AG04450 (cell line): ENCODE measurements at regions of chr13 and their contacts with region 1.

Region 1: DNA sequence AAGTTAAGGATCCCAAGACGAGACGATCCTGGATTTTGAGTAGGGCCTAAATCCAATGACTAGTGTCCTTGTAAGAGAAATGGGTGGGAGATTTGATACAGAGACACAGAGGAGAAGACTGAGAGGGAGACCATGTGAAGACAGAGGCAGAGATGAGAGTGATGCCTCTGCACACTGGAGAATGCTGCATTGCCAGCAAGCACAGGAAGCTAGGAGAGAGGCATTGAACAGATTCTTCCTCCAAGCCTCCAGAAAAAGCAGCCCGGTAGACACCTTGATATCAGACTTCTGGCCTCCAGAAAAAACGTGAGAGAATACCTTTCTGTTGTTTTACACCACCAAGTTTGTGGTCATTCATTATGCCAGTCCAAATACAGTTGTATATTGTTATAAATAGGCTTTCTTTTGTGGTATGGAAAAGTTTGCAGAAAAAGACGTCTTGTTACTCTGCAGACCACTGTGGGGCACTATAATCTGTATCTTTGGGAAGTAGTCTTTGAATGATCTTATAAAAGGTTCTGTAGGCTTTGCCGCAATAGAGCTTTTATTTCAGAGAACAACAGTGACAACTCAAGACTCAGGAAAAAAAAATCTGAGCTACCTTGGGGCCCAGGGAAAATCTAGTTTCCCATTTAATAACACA is 17.9 kb upstream of the RFC3 start:
- DNase-seq: no peak
- H3K4me3 ChIP-seq: no peak overlapping the region
- H3K27ac ChIP-seq: no peak overlapping the region
- H3K27me3 ChIP-seq: no peaks in the 10 kb centered on the region
- CTCF ChIP-seq: peak; percentile 53

Region 2: DNA sequence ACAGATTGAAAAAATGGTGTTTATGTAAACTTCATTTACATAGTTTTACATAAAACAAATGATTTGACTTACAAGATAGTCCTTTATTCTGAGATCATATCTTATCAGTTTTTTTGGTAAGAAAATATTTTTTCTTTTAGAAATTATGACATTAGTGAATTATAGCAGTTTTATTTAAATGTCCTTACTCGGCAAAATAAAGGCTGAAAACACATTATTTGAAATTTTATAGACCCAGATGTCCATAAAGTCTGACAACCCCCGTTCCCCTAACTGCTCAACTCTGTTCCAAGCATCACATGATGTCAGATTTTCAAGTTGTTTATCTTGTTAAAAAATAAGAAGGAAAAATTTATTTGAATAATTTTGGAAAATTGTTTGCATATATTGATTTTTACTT is 28.8 kb before region 1 on chr13:
- CTCF ChIA-PET with region 1: no interaction called
- POLR2A ChIA-PET with region 1: no interaction called
- DNase-seq: no peak
- H3K4me3 ChIP-seq: no peak overlapping the region
- H3K27ac ChIP-seq: no peak overlapping the region
- H3K27me3 ChIP-seq: peaks cover 3% of the 10 kb centered on the region
- CTCF ChIP-seq: no peak

Region 3: DNA sequence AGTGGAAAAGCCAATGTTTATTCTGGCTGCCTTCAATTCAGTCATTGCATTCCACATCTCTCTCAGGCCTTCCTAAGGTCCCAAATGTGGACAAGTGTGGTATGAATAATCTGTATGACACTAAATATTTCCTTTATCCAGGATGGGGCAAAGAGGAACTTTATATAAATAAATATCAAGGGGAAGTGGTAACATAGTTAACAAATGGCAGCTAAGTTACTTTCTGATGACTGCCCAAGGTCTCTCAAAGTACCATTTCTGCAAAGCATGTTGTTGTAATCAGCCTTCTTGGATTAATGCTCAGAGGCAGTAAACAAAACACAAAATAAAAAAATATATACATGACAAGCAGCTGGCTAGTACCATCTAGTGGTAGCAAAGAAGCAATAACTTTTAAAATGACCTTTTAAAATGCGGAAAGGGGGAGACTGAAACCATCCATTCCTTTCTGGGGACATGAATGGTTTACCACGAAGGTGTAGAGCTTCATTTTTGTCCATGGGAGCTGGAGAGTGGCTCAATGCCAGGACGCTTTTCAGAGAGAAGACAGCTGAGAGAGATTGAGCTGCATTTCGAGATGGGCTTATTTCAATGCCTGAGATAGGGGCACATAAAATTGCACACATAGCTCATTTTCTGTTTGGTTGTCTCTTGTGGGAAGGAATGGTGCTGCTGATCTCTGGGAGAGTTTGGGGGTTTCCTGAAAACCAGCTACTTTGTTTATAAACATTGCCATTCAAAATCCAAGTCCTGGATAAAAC is 277.1 kb after region 1 on chr13:
- CTCF ChIA-PET with region 1: interaction called, 40 read pairs
- POLR2A ChIA-PET with region 1: no interaction called
- DNase-seq: no peak
- H3K4me3 ChIP-seq: no peak overlapping the region
- H3K27ac ChIP-seq: no peak overlapping the region
- H3K27me3 ChIP-seq: no peaks in the 10 kb centered on the region
- CTCF ChIP-seq: peak; percentile 62

Region 4: DNA sequence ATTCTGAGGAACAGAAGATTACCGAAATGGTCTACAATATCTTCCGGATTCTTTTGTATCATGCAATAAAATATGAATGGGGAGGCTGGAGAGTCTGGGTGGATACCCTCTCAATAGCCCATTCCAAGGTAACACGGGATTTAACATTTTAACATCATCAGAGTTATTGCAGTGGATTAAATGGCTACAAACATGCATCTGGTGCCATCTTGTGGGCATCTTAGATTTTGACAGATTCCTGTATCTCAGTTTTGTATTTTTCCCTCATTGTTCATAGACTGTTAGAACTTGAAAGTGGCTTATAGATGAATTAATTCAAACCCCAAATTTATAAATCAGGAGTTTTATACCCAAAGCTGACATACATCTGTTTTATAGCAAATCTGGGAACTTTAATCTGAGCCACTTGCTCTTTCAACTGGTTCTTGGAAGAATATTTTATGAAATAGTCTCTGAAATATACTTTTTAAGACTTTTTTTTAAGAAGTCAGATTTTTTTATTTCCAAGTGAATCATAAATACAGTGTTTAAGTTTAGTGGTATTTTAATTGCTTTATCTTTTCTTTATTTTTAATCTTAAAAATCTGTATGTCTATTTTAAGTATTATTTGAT is 1357.2 kb after region 1 on chr13:
- CTCF ChIA-PET with region 1: interaction called, 30 read pairs
- POLR2A ChIA-PET with region 1: no interaction called
- DNase-seq: peak; percentile 16
- H3K4me3 ChIP-seq: no peak overlapping the region
- H3K27ac ChIP-seq: no peak overlapping the region
- H3K27me3 ChIP-seq: no peaks in the 10 kb centered on the region
- CTCF ChIP-seq: peak; percentile 66

Region 5: DNA sequence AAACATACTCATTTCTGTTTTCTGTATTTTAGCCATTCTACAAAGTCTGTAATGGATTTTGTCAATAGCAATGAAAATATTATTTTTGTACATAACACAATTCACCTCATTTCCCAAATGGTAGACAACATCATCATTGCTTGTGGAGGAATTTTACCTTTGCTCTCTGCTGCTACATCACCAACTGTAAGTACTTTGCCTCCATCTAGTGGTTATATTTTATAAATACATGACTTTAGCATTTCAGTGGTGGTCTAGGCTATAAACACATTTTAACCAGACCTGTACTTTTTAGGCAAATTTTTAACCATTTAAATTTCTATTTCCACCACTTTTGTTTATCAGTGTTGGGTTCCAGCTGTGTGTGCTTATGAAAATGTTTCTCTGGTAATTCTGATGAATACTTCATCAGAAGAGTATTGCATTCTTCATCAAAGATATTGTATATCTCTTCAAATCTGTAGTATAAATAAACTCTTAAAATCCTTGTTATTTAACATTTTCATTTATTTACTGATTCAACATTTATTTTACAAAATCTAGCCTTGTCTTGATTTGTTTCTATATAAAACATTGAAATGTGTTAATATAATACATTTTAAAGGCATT is 1364.4 kb after region 1 on chr13:
- CTCF ChIA-PET with region 1: interaction called, 30 read pairs
- POLR2A ChIA-PET with region 1: no interaction called
- DNase-seq: no peak
- H3K4me3 ChIP-seq: no peak overlapping the region
- H3K27ac ChIP-seq: no peak overlapping the region
- H3K27me3 ChIP-seq: no peaks in the 10 kb centered on the region
- CTCF ChIP-seq: peak; percentile 70